ENCODE measurements at regions of chr20 and their contacts with region 1.

Region 1: DNA sequence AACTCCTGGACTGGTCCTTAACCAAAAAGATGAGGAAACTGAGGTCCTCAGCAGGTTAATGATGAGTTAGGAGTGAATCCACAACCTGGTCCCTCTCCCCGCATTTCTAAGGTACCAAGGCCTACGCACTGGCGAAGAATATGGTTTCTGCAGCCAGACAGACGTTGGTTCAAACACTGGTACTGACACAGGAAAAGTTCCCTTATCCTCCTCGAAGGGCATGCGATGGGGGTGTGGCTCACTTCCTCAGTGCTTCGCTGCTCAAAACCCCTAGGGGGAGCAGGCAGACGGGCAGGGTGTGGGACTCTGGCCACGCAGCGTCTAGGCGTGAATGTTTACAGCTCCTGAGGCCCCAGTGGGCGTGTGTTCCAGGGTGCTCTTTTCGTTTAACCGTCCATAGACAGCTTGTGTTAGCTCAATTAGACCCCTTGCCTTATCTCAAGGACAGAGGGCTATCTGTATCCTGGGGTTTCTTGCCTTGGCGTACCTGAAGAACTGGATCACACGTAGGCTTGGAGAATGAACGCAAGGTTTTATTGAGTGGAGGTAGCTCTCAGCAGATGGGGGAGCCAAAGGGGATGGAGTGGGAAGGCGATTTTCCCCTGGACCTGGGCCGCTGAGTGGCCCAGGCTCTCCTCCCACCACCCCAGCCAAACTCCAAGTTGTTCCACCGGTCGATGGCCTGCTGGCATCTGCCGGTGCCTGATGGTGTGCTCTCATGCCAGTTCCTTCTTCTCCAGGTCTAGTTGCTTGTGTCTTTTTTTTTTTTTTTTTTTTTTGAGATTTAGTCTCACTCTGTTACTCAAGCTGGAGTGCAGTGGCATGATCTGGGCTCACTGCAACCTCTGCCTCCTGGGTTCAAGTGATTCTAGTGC is 31.8 kb upstream of the PTPN1 start:
- DNase-seq: peak; percentile 78
- ATAC-seq: peak; percentile 99
- H3K4me3 Mint-ChIP-seq: no peak overlapping the region
- H3K27ac Mint-ChIP-seq: no peak overlapping the region
- H3K4me1 Mint-ChIP-seq: peaks cover 6% of the 10 kb centered on the region; the same call in 1 of the 2 replicates
- H3K27me3 Mint-ChIP-seq: no peaks in the 10 kb centered on the region
- CTCF ChIP-seq: peak; percentile 60

Region 2: DNA sequence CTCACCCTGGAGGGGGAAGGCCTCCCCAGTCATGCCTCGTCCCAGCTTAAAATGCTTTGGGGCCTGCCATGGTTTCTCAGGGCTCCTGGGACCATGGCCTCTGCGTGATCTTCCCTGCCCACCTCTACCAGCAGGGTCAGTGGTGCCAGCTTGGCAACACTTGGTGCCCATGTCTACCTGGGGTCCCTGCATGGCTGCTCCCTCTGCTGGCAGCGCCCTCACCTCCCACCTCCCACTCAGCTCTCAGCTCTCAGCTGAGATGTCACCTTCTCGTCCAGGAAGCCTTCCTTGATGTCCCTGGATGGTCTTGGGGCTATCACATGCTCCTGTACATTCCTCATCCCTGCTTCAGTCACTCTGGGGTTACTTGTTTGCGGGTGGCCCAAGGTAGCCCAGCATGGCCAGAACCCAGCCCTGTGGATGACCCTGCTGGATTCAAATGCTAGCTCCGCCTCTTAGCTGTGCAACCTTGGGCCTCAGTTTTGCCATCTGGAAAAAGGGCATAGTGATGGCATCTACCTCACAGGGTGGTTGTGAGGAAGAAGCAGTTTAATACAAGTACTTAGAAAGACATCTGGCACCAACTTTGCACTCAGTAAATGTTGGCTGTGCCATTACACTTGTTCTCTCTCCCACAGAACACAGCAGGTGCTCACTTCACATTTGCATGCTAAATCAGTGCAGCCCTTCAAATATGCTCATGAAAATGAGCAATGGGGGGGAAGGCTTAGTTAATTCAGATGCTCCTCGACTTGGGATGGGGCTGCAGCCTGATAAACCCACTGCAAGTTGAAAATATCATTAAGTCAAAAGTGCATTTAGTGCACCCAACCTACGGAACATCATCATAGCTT is 21.7 kb before region 1 on chr20:
- CTCF ChIA-PET with region 1: no interaction called
- POLR2A ChIA-PET with region 1: no interaction called
- DNase-seq: no peak
- ATAC-seq: no peak
- H3K4me3 Mint-ChIP-seq: no peak overlapping the region
- H3K27ac Mint-ChIP-seq: no peak overlapping the region
- H3K4me1 Mint-ChIP-seq: peaks cover 12% of the 10 kb centered on the region
- H3K27me3 Mint-ChIP-seq: no peaks in the 10 kb centered on the region; the same call in 1 of the 2 replicates
- CTCF ChIP-seq: no peak

Region 3: GRCh38 chr20:50569864-50570836 is 91.8 kb after region 1 on chr20:
- CTCF ChIA-PET with region 1: interaction called, 12 read pairs
- POLR2A ChIA-PET with region 1: no interaction called
- DNase-seq: peak; percentile 58
- ATAC-seq: peak; percentile 98
- H3K4me3 Mint-ChIP-seq: no peak overlapping the region
- H3K27ac Mint-ChIP-seq: peak overlapping the region; percentile 57; the same call in 1 of the 2 replicates
- H3K4me1 Mint-ChIP-seq: no peaks in the 10 kb centered on the region; the same call in 1 of the 2 replicates
- H3K27me3 Mint-ChIP-seq: no peaks in the 10 kb centered on the region
- CTCF ChIP-seq: no peak

Region 4: GRCh38 chr20:50670126-50670862 is 191.9 kb after region 1 on chr20:
- CTCF ChIA-PET with region 1: no interaction called
- POLR2A ChIA-PET with region 1: no interaction called
- DNase-seq: no peak
- ATAC-seq: peak; percentile 48; the same call in 1 of the 2 replicates
- H3K4me3 Mint-ChIP-seq: no peak overlapping the region
- H3K27ac Mint-ChIP-seq: peak overlapping the region; percentile 79; the same call in 1 of the 2 replicates
- H3K4me1 Mint-ChIP-seq: peaks cover 20% of the 10 kb centered on the region
- H3K27me3 Mint-ChIP-seq: no peaks in the 10 kb centered on the region; the same call in 1 of the 2 replicates
- CTCF ChIP-seq: no peak

Region 5: GRCh38 chr20:50824193-50824632 is 345.8 kb after region 1 on chr20:
- CTCF ChIA-PET with region 1: no interaction called
- POLR2A ChIA-PET with region 1: no interaction called
- DNase-seq: no peak
- ATAC-seq: no peak
- H3K4me3 Mint-ChIP-seq: no peak overlapping the region
- H3K27ac Mint-ChIP-seq: no peak overlapping the region
- H3K4me1 Mint-ChIP-seq: 0 out of 2 replicates have a peak, but pooled peaks cover 8% of the 10 kb centered on the region
- H3K27me3 Mint-ChIP-seq: no peaks in the 10 kb centered on the region; the same call in 1 of the 2 replicates
- CTCF ChIP-seq: no peak

Measured in WTC11 (cell line).